Esophagus squamous epithelium (tissue), 5 donors: ENCODE measurements at regions of chr6 and their contacts with region 1.

Region 1: GRCh38 chr6:166435574-166435973 is 52.8 kb upstream of the MPC1 start:
- DNase-seq: no peak
- H3K4me3 ChIP-seq: no peak overlapping the region
- H3K27ac ChIP-seq: no peak overlapping the region
- H3K4me1 ChIP-seq: peaks cover 0 to 13% (median 4%) of the 10 kb centered on the region in 3 donors
- H3K27me3 ChIP-seq: no peaks in the 10 kb centered on the region
- CTCF ChIP-seq: peak in 1 of 6 experiments; percentile 31
- POLR2A ChIP-seq: no peak

Region 2: GRCh38 chr6:166751051-166751595 is 315.5 kb after region 1 on chr6:
- intact Hi-C with region 1: loop called (anchors 10 kb)
- DNase-seq: no peak
- H3K4me3 ChIP-seq: no peak overlapping the region
- H3K27ac ChIP-seq: no peak overlapping the region
- H3K4me1 ChIP-seq: no peaks in the 10 kb centered on the region
- H3K27me3 ChIP-seq: peaks cover 0 to 15% (median 0%) of the 10 kb centered on the region in 4 donors
- CTCF ChIP-seq: no peak
- POLR2A ChIP-seq: no peak